Endothelial cell of umbilical vein (primary cell): ENCODE measurements at regions of chr12 and their contacts with region 1.

Region 1: DNA sequence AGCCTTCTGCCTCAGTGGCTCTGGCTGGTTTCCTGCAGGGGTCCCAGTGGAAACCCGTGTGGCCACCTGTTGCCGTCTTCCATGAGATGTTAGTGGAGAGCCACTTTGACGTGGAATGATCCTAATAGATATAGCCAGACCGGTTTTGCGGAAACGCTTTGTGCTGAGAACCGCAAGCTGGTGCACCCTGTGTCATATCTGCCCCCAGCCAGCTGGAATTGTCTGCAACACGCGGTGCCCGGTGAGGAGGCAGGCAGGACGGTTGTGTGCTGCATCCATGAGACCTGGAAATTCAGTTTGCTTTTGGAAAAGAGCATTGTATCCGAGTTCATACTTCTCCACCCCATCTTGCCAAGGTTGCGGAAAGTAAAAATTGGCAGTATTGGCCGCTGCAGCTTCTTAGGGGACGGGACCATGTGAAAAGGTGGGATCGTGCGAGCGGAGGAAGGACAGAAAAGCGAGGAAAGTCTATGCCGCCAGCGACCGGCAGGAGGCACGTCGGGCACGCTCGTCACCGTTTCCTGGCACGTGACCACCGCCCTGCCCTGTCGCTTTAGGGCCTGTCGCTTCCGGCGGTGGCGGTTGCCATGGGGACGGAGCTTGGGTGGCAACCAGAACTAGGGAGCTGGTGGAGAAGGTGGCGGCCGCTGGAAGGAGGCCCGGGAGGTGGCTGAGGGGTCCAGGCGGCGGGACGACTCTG is at the start of gene CFAP251:
- DNase-seq: peak; percentile 81
- H3K4me3 ChIP-seq: peak within 1 kb of the TSS; percentile 20 to 53 (median 47)
- H3K27ac ChIP-seq: peak within 1 kb of the TSS; percentile 92
- H3K4me1 ChIP-seq: peaks cover 10% of the 10 kb centered on the region
- H3K27me3 ChIP-seq: no peaks in the 10 kb centered on the region
- CTCF ChIP-seq: peak; percentile 65 to 71
- POLR2A ChIP-seq: no peak
- total RNA-seq, gene CFAP251: 4.0 and 6.0 TPM in 2 replicates

Region 2: GRCh38 chr12:121905746-121906145 is 12.4 kb before region 1 on chr12:
- CTCF ChIA-PET with region 1: interaction called, 14 read pairs
- POLR2A ChIA-PET with region 1: no interaction called
- dilution Hi-C with region 1: no loop called
- intact Hi-C with region 1: no loop called
- DNase-seq: no peak
- H3K4me3 ChIP-seq: no peak overlapping the region
- H3K27ac ChIP-seq: no peak overlapping the region
- H3K4me1 ChIP-seq: no peaks in the 10 kb centered on the region
- H3K27me3 ChIP-seq: no peaks in the 10 kb centered on the region
- CTCF ChIP-seq: no peak
- POLR2A ChIP-seq: no peak

Region 3: GRCh38 chr12:121992059-121992879 is 74.1 kb after region 1 on chr12:
- CTCF ChIA-PET with region 1: interaction called, 20 read pairs
- POLR2A ChIA-PET with region 1: no interaction called
- dilution Hi-C with region 1: no loop called
- intact Hi-C with region 1: no loop called
- DNase-seq: peak; percentile 97
- H3K4me3 ChIP-seq: no peak overlapping the region
- H3K27ac ChIP-seq: peak overlapping the region; percentile 77
- H3K4me1 ChIP-seq: peaks cover 6% of the 10 kb centered on the region
- H3K27me3 ChIP-seq: no peaks in the 10 kb centered on the region
- CTCF ChIP-seq: no peak
- POLR2A ChIP-seq: no peak

Region 4: GRCh38 chr12:122123051-122123760 is 205.1 kb after region 1 on chr12:
- CTCF ChIA-PET with region 1: interaction called, 6 read pairs
- POLR2A ChIA-PET with region 1: no interaction called
- dilution Hi-C with region 1: no loop called
- intact Hi-C with region 1: loop called (anchors 5 kb)
- DNase-seq: peak; percentile 70
- H3K4me3 ChIP-seq: no peak overlapping the region
- H3K27ac ChIP-seq: no peak overlapping the region
- H3K4me1 ChIP-seq: peaks cover 6% of the 10 kb centered on the region
- H3K27me3 ChIP-seq: no peaks in the 10 kb centered on the region
- CTCF ChIP-seq: peak; percentile 65 to 67
- POLR2A ChIP-seq: no peak

Region 5: DNA sequence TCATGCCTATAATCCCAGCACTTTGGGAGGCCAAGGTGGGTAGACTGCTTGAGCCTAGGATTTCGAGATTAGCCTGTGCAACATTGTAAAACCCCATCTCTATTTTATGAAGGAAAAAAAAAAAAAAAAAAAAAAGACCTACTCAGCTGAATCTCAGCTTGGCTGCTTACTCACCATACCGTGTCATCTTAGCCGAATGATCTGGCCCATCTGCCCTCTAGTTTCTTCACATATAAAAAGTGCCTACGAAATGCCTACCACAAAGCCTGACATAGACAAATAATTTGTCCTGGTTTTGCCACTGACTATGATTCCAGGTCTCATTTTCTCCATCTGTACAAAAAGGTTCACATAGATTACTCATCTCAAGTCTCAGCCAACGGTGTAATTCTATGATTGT is 297.6 kb after region 1 on chr12:
- CTCF ChIA-PET with region 1: no interaction called
- POLR2A ChIA-PET with region 1: no interaction called
- dilution Hi-C with region 1: no loop called
- intact Hi-C with region 1: no loop called
- DNase-seq: no peak
- H3K4me3 ChIP-seq: no peak overlapping the region
- H3K27ac ChIP-seq: no peak overlapping the region
- H3K4me1 ChIP-seq: no peaks in the 10 kb centered on the region
- H3K27me3 ChIP-seq: no peaks in the 10 kb centered on the region
- CTCF ChIP-seq: no peak
- POLR2A ChIP-seq: no peak